Activated CD4-positive, alpha-beta memory T cell treated with anti-CD3 and anti-CD28 coated beads, Interleukin-2, amount 10 ng/mL, durations not matched to agents 7 days and 5 days (primary cell): ENCODE measurements at regions of chr6 and their contacts with region 1.

Region 1: DNA sequence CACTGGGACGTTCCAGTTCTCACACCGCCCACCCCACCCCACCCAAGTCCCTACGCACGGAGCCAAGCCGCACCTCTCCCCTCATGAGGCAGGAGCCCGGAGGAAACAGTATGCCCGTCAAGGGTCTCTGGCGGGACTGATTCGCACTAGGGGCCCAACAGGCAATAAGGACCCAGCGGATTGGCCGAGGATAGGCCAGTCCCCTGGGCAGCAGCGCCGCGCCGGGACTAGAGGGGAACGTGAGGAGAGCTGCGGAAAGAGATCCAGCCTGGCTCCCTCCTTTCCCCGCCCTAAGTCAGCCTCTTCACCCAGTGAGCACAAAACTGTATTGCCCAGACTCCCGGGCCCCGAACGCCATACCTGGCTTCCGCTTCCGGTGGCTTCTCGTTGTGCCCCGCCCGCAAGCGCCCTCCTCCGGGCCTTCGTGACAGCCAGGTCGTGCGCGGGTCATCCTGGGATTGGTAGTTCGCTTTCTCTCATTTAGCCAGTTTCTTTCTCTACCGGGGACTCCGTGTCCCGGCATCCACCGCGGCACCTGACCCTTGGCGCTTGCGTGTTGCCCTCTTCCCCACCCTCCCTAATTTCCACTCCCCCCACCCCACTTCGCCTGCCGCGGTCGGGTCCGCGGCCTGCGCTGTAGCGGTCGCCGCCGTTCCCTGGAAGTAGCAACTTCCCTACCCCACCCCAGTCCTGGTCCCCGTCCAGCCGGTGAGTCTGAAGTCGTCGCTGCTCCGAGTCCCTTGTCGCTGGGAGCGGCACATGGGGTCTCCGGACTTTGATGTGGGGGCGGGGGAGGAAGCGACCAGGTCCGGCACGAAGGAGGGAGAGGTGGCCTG is at the start of gene CSNK2B:
- DNase-seq: peak; percentile 99
- H3K4me3 Mint-ChIP-seq: peak within 1 kb of the TSS; percentile 86
- H3K27ac Mint-ChIP-seq: peak within 1 kb of the TSS; percentile 89
- H3K4me1 Mint-ChIP-seq: peaks cover 74% of the 10 kb centered on the region
- H3K27me3 Mint-ChIP-seq: no peaks in the 10 kb centered on the region
- total RNA-seq, gene CSNK2B: 199 to 212 TPM

Region 2: DNA sequence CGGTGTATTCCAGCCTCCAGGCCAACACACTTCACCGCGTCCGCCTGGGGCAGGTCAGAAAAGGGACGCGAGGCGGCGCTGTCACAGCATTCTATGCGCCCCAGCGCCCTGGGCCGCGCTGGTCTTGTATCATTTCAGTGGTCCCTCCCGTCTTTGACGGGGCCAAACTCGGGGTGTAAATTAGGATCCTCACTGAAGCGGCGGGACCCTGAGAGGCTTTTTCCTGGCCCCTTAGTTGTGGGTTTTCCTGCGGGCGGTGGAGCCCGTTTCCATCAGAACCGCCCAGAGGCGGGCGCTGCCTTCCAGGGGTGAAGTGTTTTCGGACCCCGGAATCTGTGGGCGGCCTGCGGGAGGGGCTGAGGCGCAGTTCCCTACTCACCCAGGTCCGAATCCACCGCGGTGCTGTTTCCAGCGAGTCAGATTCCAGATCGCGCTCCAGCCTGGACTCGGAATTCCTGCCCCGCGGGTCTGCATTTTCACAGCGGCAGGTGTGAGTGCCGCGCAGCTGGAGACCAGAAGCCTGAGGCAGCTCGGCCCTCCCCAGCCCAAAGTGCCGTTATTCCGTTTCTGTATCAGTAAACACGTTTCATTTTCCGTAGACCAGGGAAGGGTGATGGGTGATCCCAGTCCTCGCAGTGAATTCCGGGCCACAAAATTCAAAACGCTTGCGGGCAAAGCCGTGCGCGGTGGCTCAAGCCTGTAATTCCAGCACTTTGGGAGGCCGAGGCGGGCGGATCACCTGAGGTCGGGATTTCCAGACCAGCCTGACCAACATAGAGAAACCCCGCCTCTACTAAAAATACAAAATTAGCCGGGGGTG is 171.6 kb before region 1 on chr6:
- CTCF ChIA-PET with region 1: interaction called, 5 read pairs
- POLR2A ChIA-PET with region 1: interaction called, 20 read pairs
- DNase-seq: peak; percentile 85
- H3K4me3 Mint-ChIP-seq: peak overlapping the region; percentile 81
- H3K27ac Mint-ChIP-seq: peak overlapping the region; percentile 78
- H3K4me1 Mint-ChIP-seq: peaks cover 60% of the 10 kb centered on the region
- H3K27me3 Mint-ChIP-seq: no peaks in the 10 kb centered on the region

Region 3: DNA sequence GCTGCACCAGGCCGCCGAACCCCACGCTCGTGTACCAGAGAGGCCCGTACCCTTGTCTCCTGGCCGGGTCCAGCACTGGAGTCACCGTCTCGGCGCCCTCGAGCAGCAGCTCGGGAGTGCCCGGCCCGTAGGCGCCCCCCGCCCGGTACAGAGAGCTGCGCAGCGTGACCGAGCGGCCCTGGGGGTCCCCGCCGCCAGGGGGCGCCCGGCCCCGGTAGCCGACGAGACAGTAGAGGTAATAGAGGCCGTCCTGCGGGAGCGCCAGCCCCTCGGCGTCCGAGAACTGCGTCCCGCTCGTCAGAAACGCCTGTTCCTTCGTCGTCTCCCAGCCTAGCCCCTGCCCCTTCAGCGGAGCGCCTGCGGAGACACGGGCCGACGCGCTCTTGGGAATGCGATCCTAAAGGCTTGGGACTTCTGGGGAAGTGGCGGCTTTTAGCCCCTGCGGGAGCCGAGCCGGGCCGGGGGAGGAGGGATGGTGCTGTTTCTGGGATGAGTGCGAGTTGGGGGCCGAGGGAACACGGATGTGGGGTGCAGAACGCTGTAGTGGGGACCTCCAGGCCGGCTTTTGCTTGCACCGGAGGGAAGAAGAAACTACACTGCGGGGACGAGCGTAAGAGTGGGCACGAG is 84.8 kb before region 1 on chr6:
- CTCF ChIA-PET with region 1: interaction called, 4 read pairs
- POLR2A ChIA-PET with region 1: interaction called, 15 read pairs
- DNase-seq: peak; percentile 89
- H3K4me3 Mint-ChIP-seq: peak overlapping the region; percentile 91
- H3K27ac Mint-ChIP-seq: peak overlapping the region; percentile 94
- H3K4me1 Mint-ChIP-seq: peaks cover 58% of the 10 kb centered on the region
- H3K27me3 Mint-ChIP-seq: no peaks in the 10 kb centered on the region

Region 4: GRCh38 chr6:31702819-31703522 is 37.3 kb after region 1 on chr6 and contains the start of gene ABHD16A:
- CTCF ChIA-PET with region 1: interaction called, 4 read pairs
- POLR2A ChIA-PET with region 1: interaction called, 15 read pairs
- DNase-seq: peak; percentile 98
- H3K4me3 Mint-ChIP-seq: peak within 1 kb of the TSS; percentile 98
- H3K27ac Mint-ChIP-seq: peak within 1 kb of the TSS; percentile 95
- H3K4me1 Mint-ChIP-seq: peaks cover 32% of the 10 kb centered on the region
- H3K27me3 Mint-ChIP-seq: no peaks in the 10 kb centered on the region
- total RNA-seq, gene ABHD16A: 53.1 to 55.0 TPM

Region 5: DNA sequence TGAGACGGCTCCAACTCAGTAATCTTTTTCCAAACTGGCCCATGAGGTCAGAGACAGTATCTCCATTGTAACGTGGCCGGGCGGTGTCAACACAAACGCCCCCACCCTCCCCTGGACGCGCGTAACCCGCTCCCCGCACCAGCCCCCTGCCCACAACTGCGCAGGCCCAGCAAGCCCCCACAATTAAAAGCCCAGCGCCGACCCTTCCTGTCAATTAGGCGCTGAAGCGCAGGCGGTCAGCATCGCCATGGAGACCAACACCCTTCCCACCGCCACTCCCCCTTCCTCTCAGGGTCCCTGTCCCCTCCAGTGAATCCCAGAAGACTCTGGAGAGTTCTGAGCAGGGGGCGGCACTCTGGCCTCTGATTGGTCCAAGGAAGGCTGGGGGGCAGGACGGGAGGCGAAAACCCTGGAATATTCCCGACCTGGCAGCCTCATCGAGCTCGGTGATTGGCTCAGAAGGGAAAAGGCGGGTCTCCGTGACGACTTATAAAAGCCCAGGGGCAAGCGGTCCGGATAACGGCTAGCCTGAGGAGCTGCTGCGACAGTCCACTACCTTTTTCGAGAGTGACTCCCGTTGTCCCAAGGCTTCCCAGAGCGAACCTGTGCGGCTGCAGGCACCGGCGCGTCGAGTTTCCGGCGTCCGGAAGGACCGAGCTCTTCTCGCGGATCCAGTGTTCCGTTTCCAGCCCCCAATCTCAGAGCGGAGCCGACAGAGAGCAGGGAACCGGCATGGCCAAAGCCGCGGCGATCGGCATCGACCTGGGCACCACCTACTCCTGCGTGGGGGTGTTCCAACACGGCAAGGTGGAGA is 149.5 kb after region 1 on chr6 and contains the starts of genes HSPA1A and HSPA1L:
- CTCF ChIA-PET with region 1: no interaction called
- POLR2A ChIA-PET with region 1: interaction called, 10 read pairs
- DNase-seq: peak; percentile 82
- H3K4me3 Mint-ChIP-seq: peak within 1 kb of the TSS; percentile 83
- H3K27ac Mint-ChIP-seq: peak within 1 kb of the TSS; percentile 96
- H3K4me1 Mint-ChIP-seq: peaks cover 55% of the 10 kb centered on the region
- H3K27me3 Mint-ChIP-seq: no peaks in the 10 kb centered on the region
- total RNA-seq, gene HSPA1A: 147 to 151 TPM
- total RNA-seq, gene HSPA1L: 2.8 to 3.0 TPM